Left ventricle myocardium superior (tissue), 1 donor: ENCODE measurements at regions of chr12 and their contacts with region 1.

Region 1: DNA sequence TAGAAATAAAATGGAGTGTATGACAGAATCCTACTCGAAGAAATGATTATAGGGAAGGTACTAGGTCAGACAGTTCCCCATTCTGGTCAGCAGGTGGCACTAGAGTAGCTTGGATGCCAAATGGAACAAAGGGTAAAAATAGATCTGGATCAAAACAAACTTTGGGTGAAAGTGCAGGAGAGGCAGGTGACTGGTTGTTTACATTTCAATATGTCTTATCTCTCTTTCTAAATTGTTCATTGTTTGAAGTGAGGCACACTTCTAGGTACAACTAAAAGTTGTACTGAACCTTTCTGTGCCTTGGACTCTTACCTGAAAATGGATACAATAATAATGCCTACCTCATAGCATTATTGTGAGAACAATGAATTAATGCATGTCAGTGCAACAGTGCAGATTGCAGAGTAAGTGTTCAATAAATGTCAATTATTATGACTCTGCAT is 62.0 kb upstream of the OSBPL8 start:
- DNase-seq: peak; percentile 48
- ATAC-seq: peak; percentile 85

Region 2: GRCh38 chr12:76790564-76791552 is 169.3 kb after region 1 on chr12:
- intact Hi-C with region 1: loop called (anchors 1 kb)
- DNase-seq: no peak
- ATAC-seq: peak; percentile 42

Region 3: GRCh38 chr12:77010691-77011548 is 389.3 kb after region 1 on chr12:
- intact Hi-C with region 1: loop called (anchors 2 kb)
- DNase-seq: peak; percentile 75
- ATAC-seq: peak; percentile 78